Dorsolateral prefrontal cortex (tissue), 120 donors: ENCODE measurements at regions of chr5 and their contacts with region 1.

Region 1: DNA sequence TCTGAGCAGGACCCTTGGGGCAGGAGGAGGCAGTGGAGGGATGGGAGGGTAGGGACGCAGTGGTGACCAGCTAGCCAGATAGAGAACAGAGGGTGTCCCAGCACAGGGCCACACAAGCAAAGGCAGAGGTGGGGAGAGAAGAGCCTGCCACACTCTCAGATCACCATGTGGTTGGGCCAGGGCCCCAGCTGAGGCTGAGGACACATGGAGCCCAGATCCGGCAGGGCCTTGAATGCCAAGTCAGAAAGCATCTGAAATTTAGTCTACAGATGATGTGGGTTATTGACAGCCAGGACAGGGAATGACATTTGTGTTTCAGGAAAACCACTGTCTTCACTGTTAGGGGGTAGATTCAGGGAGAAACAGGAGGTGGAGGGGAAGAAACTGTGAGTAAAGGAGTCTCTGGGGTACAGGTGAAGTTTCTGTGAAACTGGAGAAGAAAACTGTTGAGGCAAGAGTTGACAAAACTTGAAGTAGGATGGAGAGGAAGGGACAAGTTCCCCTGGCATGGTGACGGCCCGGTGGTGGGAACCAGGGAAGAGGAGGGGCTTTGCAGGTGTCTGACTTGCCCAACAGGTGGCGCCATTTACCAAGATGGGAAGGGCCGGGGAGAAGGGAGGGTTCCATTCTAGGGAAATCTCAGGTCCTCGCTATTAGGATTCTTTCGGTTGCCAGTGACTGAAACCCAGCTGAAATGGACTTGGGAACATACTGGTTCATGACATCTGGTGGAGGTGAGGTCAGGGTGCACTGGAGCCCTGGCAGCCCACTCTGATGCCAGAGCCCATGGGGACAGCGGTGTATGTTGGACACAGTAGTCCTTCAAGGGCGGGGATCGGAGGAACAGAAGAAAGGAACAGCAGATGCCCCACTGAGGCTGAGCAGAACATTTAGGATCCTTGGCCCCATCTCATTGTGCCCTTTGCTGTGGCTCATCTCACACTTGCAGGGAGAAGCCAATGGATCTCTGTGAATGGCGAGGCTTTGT is 100.1 kb downstream of the KCNIP1 start:
- DNase-seq: peak in 5 of 10 donors; percentile 27 to 58 (median 35)
- H3K4me3 ChIP-seq: no peak overlapping the region
- H3K27ac ChIP-seq: no peak overlapping the region
- H3K27me3 ChIP-seq: no peaks in the 10 kb centered on the region
- CTCF ChIP-seq: peak; percentile 33 to 80 (median 67)

Region 2: DNA sequence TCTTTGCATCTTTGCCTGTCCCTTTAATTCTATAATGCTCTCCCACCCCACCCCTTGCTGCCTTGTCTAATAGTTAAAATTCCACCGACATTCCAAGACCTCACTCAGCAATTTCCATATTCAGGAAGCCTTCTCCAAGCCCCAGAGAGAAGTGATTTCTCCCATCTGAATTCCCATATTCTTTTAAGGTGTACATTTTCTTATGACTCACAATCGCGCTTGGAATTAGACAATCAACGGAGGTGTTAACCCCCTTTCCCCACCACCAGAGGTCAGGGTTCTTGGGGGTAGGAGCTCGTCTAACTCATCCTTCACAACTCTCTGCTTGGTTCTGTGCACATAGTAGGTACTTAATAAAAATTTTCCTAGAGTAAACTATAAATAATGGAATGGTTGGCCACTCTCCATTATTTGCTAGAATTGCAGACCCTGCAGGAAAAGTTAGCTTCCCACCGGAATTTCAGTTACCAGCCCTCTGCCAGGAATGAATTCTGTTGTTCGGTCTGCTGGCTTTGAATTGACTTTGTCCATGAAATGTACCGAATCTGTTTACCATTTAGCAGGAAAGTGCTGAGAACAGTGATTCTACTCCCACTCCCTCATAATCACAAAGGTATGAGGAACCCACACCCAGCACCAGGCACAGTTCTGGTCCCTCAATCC is 95.1 kb before region 1 on chr5:
- intact Hi-C with region 1: loop called in 1 of 2 experiments (anchors 5 kb)
- DNase-seq: no peak
- H3K4me3 ChIP-seq: peak overlapping the region in 1 of 59 donors; percentile 13
- H3K27ac ChIP-seq: no peak overlapping the region
- H3K27me3 ChIP-seq: peaks cover 0 to 6% (median 0%) of the 10 kb centered on the region in 45 donors
- CTCF ChIP-seq: peak in 2 of 56 donors; percentile 10 to 13

Region 3: GRCh38 chr5:170565072-170565471 is 38.8 kb before region 1 on chr5:
- intact Hi-C with region 1: loop called in 1 of 2 experiments (anchors 5 kb)
- DNase-seq: peak in 6 of 10 donors; percentile 55 to 84 (median 65)
- H3K4me3 ChIP-seq: no peak overlapping the region
- H3K27ac ChIP-seq: peak overlapping the region in 45 of 59 donors; percentile 3 to 81 (median 60)
- H3K27me3 ChIP-seq: peaks cover 0 to 2% (median 0%) of the 10 kb centered on the region in 45 donors
- CTCF ChIP-seq: peak in 1 of 56 donors; percentile 10

Region 4: DNA sequence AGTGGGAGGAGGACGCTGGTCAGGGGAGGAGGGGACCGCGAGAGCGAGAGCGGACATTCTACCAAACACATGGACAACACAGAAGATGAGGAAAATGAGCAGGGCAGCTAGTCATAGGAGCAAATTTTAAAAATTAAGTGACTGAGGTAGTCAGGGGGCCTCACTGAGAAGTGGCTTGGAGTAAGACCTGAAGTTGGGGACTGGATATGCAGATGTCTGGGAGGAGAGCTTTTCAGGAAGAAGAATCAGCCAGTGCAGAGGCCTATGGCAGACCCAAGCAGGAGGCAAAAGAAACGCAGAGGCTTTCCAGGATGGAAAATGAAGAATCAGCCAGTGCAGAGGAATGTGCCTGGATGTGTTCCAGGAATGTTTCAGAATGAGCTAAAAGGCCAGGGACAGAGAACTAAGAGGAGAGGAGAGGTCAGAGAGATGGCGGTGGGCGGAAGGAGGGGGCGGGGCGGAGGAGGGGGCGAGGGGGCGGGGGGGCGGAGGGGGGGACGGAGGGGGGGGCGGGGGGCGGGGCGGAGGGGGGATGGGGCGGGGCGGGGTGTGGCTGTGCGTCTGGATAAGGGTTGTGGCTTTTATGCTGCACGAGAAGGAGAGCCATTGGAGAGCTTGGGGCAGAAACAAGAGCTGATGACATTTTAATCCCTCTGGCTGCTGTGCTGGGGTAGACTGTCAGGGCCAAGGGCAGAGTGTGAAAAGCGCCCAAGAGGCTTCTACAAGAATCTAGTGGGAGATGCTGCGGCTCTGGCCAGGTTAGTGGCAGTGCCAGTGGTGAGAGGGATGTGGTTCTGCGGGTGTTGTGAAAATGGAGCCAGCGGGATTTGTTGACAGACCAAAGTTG is 29.6 kb after region 1 on chr5:
- intact Hi-C with region 1: loop called (anchors 1 to 2 kb)
- DNase-seq: peak in 1 of 10 donors; percentile 26
- H3K4me3 ChIP-seq: peak overlapping the region in 54 of 59 donors; percentile 0 to 59 (median 36)
- H3K27ac ChIP-seq: peak overlapping the region in 42 of 59 donors; percentile 5 to 81 (median 51)
- H3K27me3 ChIP-seq: peaks cover 0 to 4% (median 0%) of the 10 kb centered on the region in 45 donors
- CTCF ChIP-seq: peak in 29 of 56 donors; percentile 1 to 99 (median 23)